Activated CD4-positive, alpha-beta memory T cell treated with anti-CD3 and anti-CD28 coated beads for 36 hours (primary cell): ENCODE measurements at regions of chr9 and their contacts with region 1.

Region 1: GRCh38 chr9:5510360-5510931 is at the start of gene PDCD1LG2:
- DNase-seq: peak; percentile 82
- H3K4me3 Mint-ChIP-seq: peak within 1 kb of the TSS; percentile 73
- H3K27ac Mint-ChIP-seq: peak within 1 kb of the TSS; percentile 90
- H3K4me1 Mint-ChIP-seq: peaks cover 51% of the 10 kb centered on the region
- H3K27me3 Mint-ChIP-seq: no peaks in the 10 kb centered on the region
- total RNA-seq, gene PDCD1LG2: 0.73 to 0.83 TPM

Region 2: GRCh38 chr9:5375091-5375490 is 135.4 kb before region 1 on chr9:
- CTCF ChIA-PET with region 1: no interaction called
- POLR2A ChIA-PET with region 1: no interaction called
- intact Hi-C with region 1: no loop called
- DNase-seq: peak; percentile 76
- H3K4me3 Mint-ChIP-seq: no peak overlapping the region
- H3K27ac Mint-ChIP-seq: peak overlapping the region; percentile 59
- H3K4me1 Mint-ChIP-seq: peaks cover 31% of the 10 kb centered on the region
- H3K27me3 Mint-ChIP-seq: no peaks in the 10 kb centered on the region

Region 3: GRCh38 chr9:5459289-5459829 is 51.1 kb before region 1 on chr9:
- CTCF ChIA-PET with region 1: no interaction called
- POLR2A ChIA-PET with region 1: interaction called, 4 read pairs
- intact Hi-C with region 1: loop called (anchors 1 kb)
- DNase-seq: peak; percentile 57
- H3K4me3 Mint-ChIP-seq: peak overlapping the region; percentile 68
- H3K27ac Mint-ChIP-seq: peak overlapping the region; percentile 87
- H3K4me1 Mint-ChIP-seq: peaks cover 73% of the 10 kb centered on the region
- H3K27me3 Mint-ChIP-seq: no peaks in the 10 kb centered on the region

Region 4: DNA sequence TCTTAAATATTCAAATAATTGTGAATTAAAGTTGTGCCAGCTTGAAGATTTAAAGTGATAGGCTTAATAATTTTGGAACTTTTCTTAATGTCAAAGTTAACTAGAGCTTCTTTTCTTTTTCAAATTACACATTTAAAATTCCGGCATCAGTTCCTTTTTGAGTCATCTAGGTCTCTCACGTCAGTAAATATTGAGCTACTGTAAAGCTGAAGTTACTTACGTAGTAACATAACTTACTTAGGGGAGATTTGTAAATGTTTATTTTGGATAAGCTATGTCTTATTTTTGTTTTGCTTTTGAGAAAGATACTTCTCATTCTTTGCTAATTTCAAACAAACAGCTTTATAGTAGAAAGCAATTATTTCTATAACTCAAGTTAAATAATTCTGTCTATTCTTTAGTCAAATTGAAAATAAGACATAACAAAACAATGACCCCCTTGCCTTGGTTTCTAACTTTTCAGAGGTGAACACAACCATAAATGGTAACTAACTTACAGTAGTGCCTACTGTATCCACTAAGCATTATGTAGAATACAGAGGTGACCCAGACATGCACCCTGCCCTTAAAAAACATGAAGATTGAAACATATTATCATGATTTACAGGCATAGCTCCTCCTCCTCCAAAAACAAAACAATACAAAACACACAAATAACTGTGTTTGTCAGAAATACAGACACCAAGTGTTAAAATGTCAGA is 30.3 kb before region 1 on chr9:
- CTCF ChIA-PET with region 1: no interaction called
- POLR2A ChIA-PET with region 1: interaction called, 3 read pairs
- intact Hi-C with region 1: loop called (anchors 1 kb)
- DNase-seq: no peak
- H3K4me3 Mint-ChIP-seq: no peak overlapping the region
- H3K27ac Mint-ChIP-seq: no peak overlapping the region
- H3K4me1 Mint-ChIP-seq: peaks cover 21% of the 10 kb centered on the region
- H3K27me3 Mint-ChIP-seq: no peaks in the 10 kb centered on the region

Region 5: GRCh38 chr9:5493679-5494511 is 16.6 kb before region 1 on chr9:
- CTCF ChIA-PET with region 1: interaction called, 3 read pairs
- POLR2A ChIA-PET with region 1: interaction called, 13 read pairs
- intact Hi-C with region 1: loop called (anchors 1 kb)
- DNase-seq: peak; percentile 70
- H3K4me3 Mint-ChIP-seq: no peak overlapping the region
- H3K27ac Mint-ChIP-seq: peak overlapping the region; percentile 72
- H3K4me1 Mint-ChIP-seq: peaks cover 23% of the 10 kb centered on the region
- H3K27me3 Mint-ChIP-seq: no peaks in the 10 kb centered on the region

Region 6: GRCh38 chr9:5557606-5558587 is 47.5 kb after region 1 on chr9:
- CTCF ChIA-PET with region 1: no interaction called
- POLR2A ChIA-PET with region 1: no interaction called
- intact Hi-C with region 1: loop called (anchors 1 kb)
- DNase-seq: peak; percentile 65
- H3K4me3 Mint-ChIP-seq: no peak overlapping the region
- H3K27ac Mint-ChIP-seq: peak overlapping the region; percentile 24
- H3K4me1 Mint-ChIP-seq: peaks cover 46% of the 10 kb centered on the region
- H3K27me3 Mint-ChIP-seq: no peaks in the 10 kb centered on the region